Activated CD4-positive, alpha-beta T cell treated with anti-CD3 and anti-CD28 coated beads for 36 hours (primary cell): ENCODE measurements at regions of chr7 and their contacts with region 1.

Region 1: GRCh38 chr7:28955718-28956619 is 2.2 kb downstream of the TRIL start:
- DNase-seq: peak; percentile 67
- ATAC-seq: peak; percentile 53
- H3K4me3 Mint-ChIP-seq: peak overlapping the region; percentile 24
- H3K27ac Mint-ChIP-seq: no peak overlapping the region
- H3K4me1 Mint-ChIP-seq: peaks cover 7% of the 10 kb centered on the region
- H3K27me3 Mint-ChIP-seq: peaks cover 53% of the 10 kb centered on the region

Region 2: GRCh38 chr7:28318101-28318762 is 637.7 kb before region 1 on chr7:
- CTCF ChIA-PET with region 1: no interaction called
- POLR2A ChIA-PET with region 1: no interaction called
- intact Hi-C with region 1: no loop called
- DNase-seq: no peak
- ATAC-seq: peak; percentile 51
- H3K4me3 Mint-ChIP-seq: no peak overlapping the region
- H3K27ac Mint-ChIP-seq: no peak overlapping the region
- H3K4me1 Mint-ChIP-seq: peaks cover 4% of the 10 kb centered on the region
- H3K27me3 Mint-ChIP-seq: peaks cover 22% of the 10 kb centered on the region

Region 3: DNA sequence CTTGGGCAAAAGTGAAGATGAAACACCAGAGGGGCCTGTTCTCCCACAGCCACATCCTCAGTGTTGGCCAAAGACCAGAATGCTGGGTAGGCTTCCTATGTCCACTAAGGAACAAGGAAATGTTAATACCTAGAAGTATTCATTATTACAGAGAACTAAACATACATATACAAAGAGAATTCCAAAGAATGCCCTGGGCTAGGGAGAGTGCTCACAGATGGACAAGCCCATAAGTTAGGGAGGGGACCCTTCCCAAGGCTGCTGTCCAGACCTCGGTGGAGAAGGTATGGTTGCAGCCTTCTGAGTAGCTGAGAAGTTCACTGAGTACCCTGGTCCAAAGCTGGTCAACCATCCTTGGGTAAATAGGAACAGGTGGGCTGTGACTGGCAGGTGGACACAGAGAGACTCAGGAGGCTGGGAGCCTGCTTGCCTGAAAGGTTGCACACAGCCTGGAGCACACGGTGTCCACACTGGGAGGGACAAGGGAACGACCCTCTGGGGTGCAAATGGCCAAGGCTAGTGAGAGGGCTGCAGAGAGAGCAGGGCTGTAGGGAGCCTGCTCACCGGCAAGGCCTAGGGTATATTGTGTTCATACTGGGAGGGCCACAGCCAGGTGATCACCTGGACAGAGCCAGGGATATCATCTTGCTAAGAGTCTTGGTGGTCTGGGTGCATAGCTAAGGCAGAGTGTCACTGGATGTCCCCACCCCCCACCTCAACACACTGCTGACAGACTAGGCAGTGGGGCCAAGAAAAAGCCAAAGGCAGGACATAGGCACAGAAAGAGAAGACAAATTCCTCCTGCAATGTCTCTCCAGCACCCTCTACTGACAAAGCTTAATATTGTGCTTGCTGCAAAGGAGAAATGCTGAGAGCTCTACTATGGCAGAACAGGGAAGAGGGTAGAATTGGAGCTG is 150.0 kb after region 1 on chr7:
- CTCF ChIA-PET with region 1: interaction called, 11 read pairs
- POLR2A ChIA-PET with region 1: no interaction called
- intact Hi-C with region 1: loop called (anchors 1 kb)
- DNase-seq: peak; percentile 24
- ATAC-seq: peak; percentile 68
- H3K4me3 Mint-ChIP-seq: no peak overlapping the region
- H3K27ac Mint-ChIP-seq: no peak overlapping the region
- H3K4me1 Mint-ChIP-seq: no peaks in the 10 kb centered on the region
- H3K27me3 Mint-ChIP-seq: peaks cover 6% of the 10 kb centered on the region

Region 4: GRCh38 chr7:29564496-29565223 is 608.7 kb after region 1 on chr7:
- CTCF ChIA-PET with region 1: no interaction called
- POLR2A ChIA-PET with region 1: no interaction called
- intact Hi-C with region 1: loop called in 1 of 2 experiments (anchors 10 kb)
- DNase-seq: peak; percentile 16
- ATAC-seq: no peak
- H3K4me3 Mint-ChIP-seq: peak overlapping the region; percentile 70
- H3K27ac Mint-ChIP-seq: no peak overlapping the region
- H3K4me1 Mint-ChIP-seq: peaks cover 15% of the 10 kb centered on the region
- H3K27me3 Mint-ChIP-seq: peaks cover 63% of the 10 kb centered on the region